ENCODE measurements at regions of chr13 and their contacts with region 1.

Region 1: GRCh38 chr13:106619688-106620555 is 52.0 kb upstream of the ARGLU1 start:
- H3K4me3 ChIP-seq: no peak overlapping the region
- H3K27ac ChIP-seq: no peak overlapping the region
- H3K4me1 ChIP-seq: no peaks in the 10 kb centered on the region
- CTCF ChIP-seq: no peak; the same call in 1 of the 2 replicates

Region 2: DNA sequence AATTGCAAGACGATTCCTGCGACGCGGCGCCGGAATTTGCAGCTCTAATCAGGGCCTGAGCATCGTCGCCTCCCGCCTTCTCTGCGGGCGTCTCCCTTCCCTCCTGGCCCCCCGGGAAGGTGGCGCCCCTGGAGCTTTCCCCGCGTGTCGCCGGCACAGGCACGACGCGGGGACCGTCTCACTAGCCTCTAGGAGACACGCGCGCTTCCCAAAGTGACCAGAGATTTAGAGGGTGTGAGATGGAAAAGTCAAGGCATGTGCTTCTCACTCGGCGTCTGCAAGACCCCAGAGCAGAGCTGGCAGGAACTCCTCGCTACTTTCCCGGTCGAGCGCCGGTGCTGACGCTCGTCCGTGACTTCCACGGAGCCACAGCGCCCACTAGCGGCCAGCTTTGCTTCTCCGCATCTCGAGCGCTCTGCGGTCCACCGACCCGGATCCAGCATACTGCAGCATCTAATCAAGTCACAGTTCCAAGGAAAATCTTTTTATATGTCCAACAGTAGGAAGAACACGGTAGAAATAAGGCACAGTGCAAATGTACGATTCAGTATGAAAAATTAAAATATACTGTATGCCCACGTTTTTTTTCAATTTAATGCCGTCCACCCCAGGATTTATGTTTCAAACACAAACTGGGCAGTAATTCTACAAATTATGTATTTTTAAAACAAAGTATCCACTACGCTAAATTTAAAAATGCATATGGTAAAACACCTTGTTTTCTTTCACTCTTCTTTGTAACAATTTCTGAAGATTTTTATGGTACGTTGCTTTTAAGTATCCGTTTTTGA is 83.5 kb before region 1 on chr13:
- CTCF ChIA-PET with region 1: interaction called, 4 read pairs
- POLR2A ChIA-PET with region 1: interaction called, 10 read pairs
- H3K4me3 ChIP-seq: peak overlapping the region; percentile 54
- H3K27ac ChIP-seq: peak overlapping the region; percentile 91
- H3K4me1 ChIP-seq: 0 out of 2 replicates have a peak, but pooled peaks cover 3% of the 10 kb centered on the region
- CTCF ChIP-seq: no peak

Region 3: GRCh38 chr13:106609116-106609515 is 10.8 kb before region 1 on chr13:
- CTCF ChIA-PET with region 1: interaction called, 17 read pairs
- POLR2A ChIA-PET with region 1: no interaction called
- H3K4me3 ChIP-seq: no peak overlapping the region
- H3K27ac ChIP-seq: no peak overlapping the region
- H3K4me1 ChIP-seq: no peaks in the 10 kb centered on the region
- CTCF ChIP-seq: no peak

Measured in HEK293 (cell line).